ENCODE measurements at regions of chr2 and their contacts with region 1.

Region 1: DNA sequence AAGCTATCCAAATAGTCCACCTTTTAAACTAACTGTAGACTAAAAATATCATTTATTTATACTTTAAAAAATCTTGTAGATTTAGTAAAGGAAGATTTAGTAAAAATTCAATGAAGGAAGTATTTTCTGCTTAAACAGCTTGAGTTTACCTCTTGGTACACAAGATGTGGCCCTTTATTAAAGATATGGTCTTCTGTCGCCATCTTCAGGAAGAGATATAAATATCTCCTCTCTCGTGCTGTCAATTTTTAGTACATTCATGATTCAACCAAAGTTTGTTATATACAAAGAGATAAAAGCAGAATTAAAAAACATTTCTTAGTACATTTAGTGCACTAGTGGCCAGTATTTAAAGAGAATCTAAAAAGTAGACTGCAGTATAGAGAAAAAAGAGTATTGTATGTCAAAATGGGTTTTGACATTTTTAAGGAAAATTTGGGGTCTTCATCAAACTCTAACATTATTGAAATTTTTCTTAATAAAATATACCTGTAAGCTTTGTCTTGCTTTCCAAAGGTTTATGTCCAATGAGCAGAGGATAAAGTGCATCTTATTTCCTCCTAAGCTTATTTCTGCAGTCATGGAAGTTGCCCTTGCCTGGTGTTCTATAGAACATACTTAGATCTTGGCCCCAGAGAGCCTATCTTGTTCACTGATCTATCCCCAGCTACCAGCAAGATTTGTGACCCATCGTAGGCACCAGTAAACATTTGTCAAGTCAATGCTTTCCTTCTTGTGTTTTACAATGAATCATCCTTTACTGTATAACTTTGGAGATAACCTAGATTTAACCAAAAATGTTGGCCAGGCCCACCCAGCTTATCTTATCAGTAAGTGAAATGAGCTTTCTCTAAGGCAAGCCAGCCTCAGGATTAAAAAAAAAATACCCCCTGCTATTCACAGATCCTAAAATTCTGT is 18.5 kb upstream of the EML6 start:
- DNase-seq: peak; percentile 84
- ATAC-seq: peak; percentile 90
- H3K4me3 ChIP-seq: no peak overlapping the region
- H3K27ac ChIP-seq: no peak overlapping the region
- H3K4me1 ChIP-seq: no peaks in the 10 kb centered on the region
- H3K27me3 ChIP-seq: no peaks in the 10 kb centered on the region
- CTCF ChIP-seq: peak; percentile 79

Region 2: DNA sequence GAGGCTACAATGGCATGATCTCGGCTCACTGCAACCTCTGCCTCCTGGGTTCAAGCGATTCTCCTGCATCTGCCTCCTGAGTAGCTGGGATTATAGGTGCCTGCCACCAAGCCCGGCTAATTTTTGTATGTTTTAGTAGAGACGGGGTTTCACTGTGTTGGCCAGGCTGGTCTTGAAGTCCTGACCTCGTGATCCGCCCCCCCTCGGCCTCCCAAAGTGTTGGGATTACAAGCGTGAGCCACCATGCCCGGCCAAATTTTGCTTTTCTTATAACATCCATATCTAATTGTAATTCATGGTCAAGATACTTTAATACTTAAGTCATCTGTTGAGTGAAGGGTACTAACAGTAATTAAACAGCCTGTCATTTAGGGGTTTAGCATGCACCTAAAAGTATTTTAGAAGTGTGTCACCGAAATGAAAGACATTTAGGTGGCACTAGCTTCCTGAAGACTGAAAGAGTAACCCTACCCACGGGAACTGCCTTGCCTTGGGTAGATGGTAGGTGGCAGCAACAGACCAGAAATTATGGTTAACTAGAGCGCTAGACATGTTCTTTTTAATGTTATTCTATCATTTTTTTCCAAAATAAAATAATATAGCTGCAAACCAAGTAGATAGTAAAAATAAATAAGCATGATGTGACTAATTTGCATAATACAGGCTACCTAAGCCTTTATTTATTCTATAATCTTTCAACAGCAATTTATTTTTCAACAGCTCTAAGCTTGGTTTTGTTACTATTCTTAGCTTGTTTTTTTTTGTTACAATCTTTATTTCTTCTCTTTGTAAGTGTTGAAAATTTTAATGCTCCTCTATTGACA is 598.1 kb before region 1 on chr2:
- CTCF ChIA-PET with region 1: interaction called, 24 read pairs
- POLR2A ChIA-PET with region 1: no interaction called
- intact Hi-C with region 1: loop called (anchors 1 kb)
- DNase-seq: peak; percentile 81
- ATAC-seq: peak; percentile 72
- H3K4me3 ChIP-seq: peak overlapping the region; percentile 58
- H3K27ac ChIP-seq: no peak overlapping the region
- H3K4me1 ChIP-seq: peaks cover 26% of the 10 kb centered on the region
- H3K27me3 ChIP-seq: no peaks in the 10 kb centered on the region
- CTCF ChIP-seq: peak; percentile 91

Region 3: GRCh38 chr2:54115284-54116137 is 589.4 kb before region 1 on chr2 and contains the start of gene ACYP2:
- CTCF ChIA-PET with region 1: no interaction called
- POLR2A ChIA-PET with region 1: interaction called, 9 read pairs
- intact Hi-C with region 1: loop called (anchors 2 kb)
- DNase-seq: peak; percentile 93
- ATAC-seq: peak; percentile 90
- H3K4me3 ChIP-seq: peak within 1 kb of the TSS; percentile 82
- H3K27ac ChIP-seq: peak within 1 kb of the TSS; percentile 92
- H3K4me1 ChIP-seq: peaks cover 8% of the 10 kb centered on the region; the same call in 1 of the 2 replicates
- H3K27me3 ChIP-seq: no peaks in the 10 kb centered on the region
- CTCF ChIP-seq: peak; percentile 42; the same call in 1 of the 2 replicates
- total RNA-seq, gene ACYP2: 2.9 and 8.3 TPM in 2 replicates

Region 4: GRCh38 chr2:54455563-54456361 is 249.2 kb before region 1 on chr2 and contains the start of gene SPTBN1:
- CTCF ChIA-PET with region 1: no interaction called
- POLR2A ChIA-PET with region 1: no interaction called
- intact Hi-C with region 1: loop called (anchors 5 kb)
- DNase-seq: peak; percentile 66
- ATAC-seq: peak; percentile 69
- H3K4me3 ChIP-seq: peak within 1 kb of the TSS; percentile 93
- H3K27ac ChIP-seq: peak within 1 kb of the TSS; percentile 43
- H3K4me1 ChIP-seq: peaks cover 29% of the 10 kb centered on the region
- H3K27me3 ChIP-seq: no peaks in the 10 kb centered on the region
- CTCF ChIP-seq: no peak
- total RNA-seq, gene SPTBN1: 202 and 235 TPM in 2 replicates

Region 5: DNA sequence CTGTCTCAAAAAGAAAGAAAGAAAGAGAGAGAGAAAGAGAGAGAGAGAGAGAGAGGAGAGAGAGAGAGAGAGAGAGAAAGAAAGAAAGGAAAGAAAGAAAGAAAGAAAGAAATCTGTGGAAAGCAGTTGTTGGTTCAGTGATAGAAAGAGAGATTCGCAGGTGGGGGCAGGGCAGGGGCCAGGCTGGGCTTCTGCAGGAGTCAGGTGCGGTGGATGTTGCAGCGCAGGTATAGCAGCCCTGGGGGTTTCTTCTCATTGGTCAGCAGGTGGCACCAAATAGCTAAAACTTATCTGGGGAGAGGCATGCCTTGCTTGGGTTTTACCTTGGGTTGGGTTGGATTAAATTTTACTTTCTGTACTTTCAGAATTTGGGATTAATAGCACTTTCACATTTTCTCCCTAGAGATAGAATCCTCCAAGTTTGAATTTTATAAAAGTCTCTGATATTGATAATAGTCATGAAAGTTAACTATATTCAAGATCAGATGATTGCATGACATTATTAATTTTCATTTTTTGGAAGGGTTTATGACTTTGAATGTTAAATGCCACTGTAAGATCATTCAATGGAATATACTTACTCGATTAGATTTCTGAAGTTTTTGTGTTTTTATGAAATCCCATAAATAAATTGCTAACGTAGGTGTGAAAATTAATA is 182.2 kb before region 1 on chr2:
- CTCF ChIA-PET with region 1: interaction called, 3 read pairs
- POLR2A ChIA-PET with region 1: no interaction called
- intact Hi-C with region 1: loop called (anchors 1 kb)
- DNase-seq: peak; percentile 88
- ATAC-seq: peak; percentile 79
- H3K4me3 ChIP-seq: no peak overlapping the region
- H3K27ac ChIP-seq: peak overlapping the region; percentile 28
- H3K4me1 ChIP-seq: peaks cover 35% of the 10 kb centered on the region
- H3K27me3 ChIP-seq: no peaks in the 10 kb centered on the region
- CTCF ChIP-seq: peak; percentile 79

Region 6: DNA sequence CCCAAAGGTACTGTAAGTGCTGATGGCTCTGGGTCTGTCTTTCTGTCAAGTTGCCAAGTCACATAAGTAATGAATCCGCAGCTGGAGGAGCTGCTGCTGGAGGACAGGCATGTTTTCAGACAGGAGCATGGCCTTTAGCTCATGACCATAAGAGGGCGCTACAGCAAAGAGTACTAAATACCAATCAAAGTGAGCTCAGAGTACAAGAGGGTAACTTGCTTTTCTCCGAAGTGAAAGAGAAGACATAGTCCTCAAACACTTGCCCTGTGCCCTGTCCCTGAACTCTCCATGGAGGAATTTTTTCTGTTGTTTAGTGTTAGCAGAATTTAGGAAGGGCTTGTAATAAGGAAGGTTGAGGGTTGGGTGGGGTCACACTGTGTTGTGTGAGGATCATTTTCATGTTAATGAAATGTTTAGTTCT is 39.5 kb before region 1 on chr2:
- CTCF ChIA-PET with region 1: interaction called, 13 read pairs
- POLR2A ChIA-PET with region 1: no interaction called
- intact Hi-C with region 1: loop called (anchors 5 kb)
- DNase-seq: peak; percentile 61
- ATAC-seq: peak; percentile 63; the same call in 1 of the 2 replicates
- H3K4me3 ChIP-seq: no peak overlapping the region
- H3K27ac ChIP-seq: peak overlapping the region; percentile 26
- H3K4me1 ChIP-seq: peaks cover 15% of the 10 kb centered on the region
- H3K27me3 ChIP-seq: no peaks in the 10 kb centered on the region
- CTCF ChIP-seq: peak; percentile 83

Region 7: GRCh38 chr2:54750040-54750439 is 45.1 kb after region 1 on chr2:
- CTCF ChIA-PET with region 1: no interaction called
- POLR2A ChIA-PET with region 1: no interaction called
- intact Hi-C with region 1: no loop called
- DNase-seq: peak; percentile 50
- ATAC-seq: 0 out of 2 replicates have a peak, but pooled peaks have one; percentile 50
- H3K4me3 ChIP-seq: no peak overlapping the region
- H3K27ac ChIP-seq: no peak overlapping the region
- H3K4me1 ChIP-seq: no peaks in the 10 kb centered on the region
- H3K27me3 ChIP-seq: no peaks in the 10 kb centered on the region
- CTCF ChIP-seq: no peak

Region 8: GRCh38 chr2:54763636-54764291 is 58.8 kb after region 1 on chr2:
- CTCF ChIA-PET with region 1: no interaction called
- POLR2A ChIA-PET with region 1: no interaction called
- intact Hi-C with region 1: no loop called
- DNase-seq: no peak
- ATAC-seq: no peak
- H3K4me3 ChIP-seq: no peak overlapping the region
- H3K27ac ChIP-seq: no peak overlapping the region
- H3K4me1 ChIP-seq: peaks cover 38% of the 10 kb centered on the region
- H3K27me3 ChIP-seq: no peaks in the 10 kb centered on the region
- CTCF ChIP-seq: peak; percentile 39

Measured in PC-3 (cell line).